T-cell (primary cell): ENCODE measurements at regions of chr2 and their contacts with region 1.

Region 1: GRCh38 chr2:118269408-118270051 is 181.3 kb downstream of the INSIG2 start:
- DNase-seq: no peak
- ATAC-seq: no peak
- H3K4me3 ChIP-seq: no peak overlapping the region
- H3K4me3 Mint-ChIP-seq: no peak overlapping the region
- H3K27ac ChIP-seq: no peak overlapping the region
- H3K27ac Mint-ChIP-seq: no peak overlapping the region
- H3K4me1 ChIP-seq: no peaks in the 10 kb centered on the region
- H3K4me1 Mint-ChIP-seq: no peaks in the 10 kb centered on the region
- H3K27me3 ChIP-seq: peaks cover 0 to 8% of the 10 kb centered on the region in 2 experiments
- H3K27me3 Mint-ChIP-seq: peaks cover 20 to 24% of the 10 kb centered on the region in 2 donors

Region 2: DNA sequence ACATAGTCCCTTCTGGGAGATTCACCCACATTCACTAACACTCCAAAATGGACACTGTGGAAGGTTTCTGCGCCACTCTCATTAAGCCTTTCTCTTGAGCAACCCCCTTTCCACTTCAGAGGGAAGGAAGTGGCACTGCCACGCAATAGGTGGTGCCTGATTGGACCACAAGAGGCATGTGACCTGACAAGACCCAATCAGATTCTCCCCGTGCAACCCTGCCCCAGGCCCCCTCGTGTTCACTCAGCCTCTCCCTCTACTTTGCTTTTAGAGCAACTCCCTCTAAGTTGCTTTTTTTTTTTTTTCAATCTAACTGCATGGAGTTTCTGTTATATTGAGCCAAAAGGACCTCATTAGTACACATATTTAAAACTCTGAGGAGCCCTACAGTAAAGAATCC is 419.9 kb after region 1 on chr2:
- CTCF ChIA-PET with region 1: no interaction called
- POLR2A ChIA-PET with region 1: interaction called in 1 of 2 experiments, 11 read pairs
- DNase-seq: no peak
- ATAC-seq: no peak
- H3K4me3 ChIP-seq: no peak overlapping the region
- H3K4me3 Mint-ChIP-seq: no peak overlapping the region
- H3K27ac ChIP-seq: no peak overlapping the region
- H3K27ac Mint-ChIP-seq: no peak overlapping the region
- H3K4me1 ChIP-seq: no peaks in the 10 kb centered on the region
- H3K4me1 Mint-ChIP-seq: no peaks in the 10 kb centered on the region
- H3K27me3 ChIP-seq: peaks cover 0 to 6% of the 10 kb centered on the region in 2 experiments
- H3K27me3 Mint-ChIP-seq: peaks cover 6 to 11% of the 10 kb centered on the region in 2 donors